GM12878 (cell line): ENCODE measurements at regions of chr9 and their contacts with region 1.

Region 1: GRCh38 chr9:97109194-97109811 is 70.4 kb upstream of the CTSV start:
- DNase-seq: peak; percentile 1
- ATAC-seq: peak; percentile 86
- H3K4me3 ChIP-seq: no peak overlapping the region
- H3K27ac ChIP-seq: no peak overlapping the region
- H3K4me1 ChIP-seq: no peaks in the 10 kb centered on the region
- H3K27me3 ChIP-seq: no peaks in the 10 kb centered on the region; a peak in 1 of 4 replicates
- CTCF ChIP-seq: peak; percentile 29 to 72 (median 69); a peak in 4 of 6 replicates
- EP300 ChIP-seq: no peak
- POLR2A ChIP-seq: no peak
- RAD21 ChIP-seq: peak; percentile 35; the same call in 1 of the 2 replicates

Region 2: DNA sequence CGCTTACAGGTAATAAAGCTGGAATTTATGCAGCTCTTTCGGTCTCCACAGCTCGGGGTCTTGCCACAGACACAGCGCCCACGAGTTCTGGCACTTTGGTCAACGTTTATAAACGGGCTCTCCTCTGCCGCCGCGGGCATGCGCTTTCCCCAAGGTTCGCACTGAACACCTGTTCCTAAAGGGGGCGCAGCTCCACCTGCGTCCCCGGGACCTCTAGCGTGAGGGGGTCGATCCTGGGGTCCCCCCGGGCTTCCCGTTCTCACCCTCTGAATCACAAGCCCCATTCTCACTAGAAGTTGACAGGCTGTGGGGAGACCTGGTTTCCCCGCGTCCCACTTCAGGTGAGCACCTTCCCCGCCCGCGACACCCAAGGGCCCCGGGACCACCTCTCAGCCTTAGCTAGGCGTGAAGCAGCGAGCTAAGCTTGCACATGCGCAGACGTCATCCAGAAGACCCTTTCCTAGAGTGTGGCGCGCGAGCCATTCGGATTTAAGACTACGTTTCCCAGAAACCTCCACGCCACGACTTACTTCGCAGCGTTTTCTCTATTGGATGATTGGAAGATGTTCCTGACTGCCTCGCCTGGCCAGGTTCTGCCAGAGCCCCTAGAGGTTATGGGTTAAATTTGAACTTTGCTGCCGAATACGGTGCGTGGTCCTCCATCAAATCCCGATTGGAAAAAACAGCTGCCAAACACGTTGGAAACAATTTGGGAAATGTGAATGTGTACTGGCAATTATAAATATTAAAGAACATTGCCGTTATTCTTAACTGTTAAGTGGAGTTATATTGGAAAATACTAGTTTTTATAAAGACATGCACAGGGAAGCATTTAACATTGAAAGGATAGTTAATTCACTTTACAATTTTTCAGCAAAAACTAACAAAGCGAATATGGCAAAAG is 233.6 kb before region 1 on chr9:
- CTCF ChIA-PET with region 1: interaction called, 5 read pairs
- POLR2A ChIA-PET with region 1: no interaction called
- RAD21 ChIA-PET with region 1: interaction called, 3 read pairs
- SMC1A ChIA-PET with region 1: no interaction called
- in situ Hi-C with region 1: no loop called
- intact Hi-C with region 1: loop called (anchors 5 kb)
- DNase-seq: peak; percentile 51
- ATAC-seq: peak; percentile 85
- H3K4me3 ChIP-seq: peak overlapping the region; percentile 62
- H3K27ac ChIP-seq: peak overlapping the region; percentile 22
- H3K4me1 ChIP-seq: peaks cover 35% of the 10 kb centered on the region
- H3K27me3 ChIP-seq: no peaks in the 10 kb centered on the region; a peak in 1 of 4 replicates
- CTCF ChIP-seq: peak; percentile 21 to 36 (median 23); a peak in 3 of 6 replicates
- EP300 ChIP-seq: no peak
- POLR2A ChIP-seq: peak; percentile 55
- RAD21 ChIP-seq: 0 out of 2 replicates have a peak, but pooled peaks have one; percentile 3

Region 3: DNA sequence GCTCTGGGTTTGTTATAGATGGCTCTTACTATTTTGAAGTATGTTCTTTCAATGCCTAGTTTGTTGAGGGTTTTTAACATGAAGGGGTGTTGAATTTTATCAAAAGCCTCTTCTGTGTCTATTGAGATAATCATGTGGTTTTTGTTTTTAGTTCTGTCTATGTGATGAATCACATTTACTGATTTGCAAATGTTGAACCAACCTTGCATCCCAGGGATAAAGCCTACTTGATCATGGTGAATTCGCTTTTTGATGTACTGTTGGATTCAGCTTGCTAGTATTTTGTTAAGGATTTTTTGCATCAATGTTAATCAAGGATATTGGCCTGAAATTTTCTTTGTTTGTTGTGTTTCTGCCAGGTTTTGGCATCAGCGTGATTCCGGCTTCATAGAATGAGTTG is 223.7 kb after region 1 on chr9:
- CTCF ChIA-PET with region 1: no interaction called
- POLR2A ChIA-PET with region 1: no interaction called
- RAD21 ChIA-PET with region 1: no interaction called
- SMC1A ChIA-PET with region 1: no interaction called
- in situ Hi-C with region 1: no loop called
- intact Hi-C with region 1: no loop called
- DNase-seq: no peak
- ATAC-seq: no peak
- H3K4me3 ChIP-seq: no peak overlapping the region
- H3K27ac ChIP-seq: no peak overlapping the region
- H3K4me1 ChIP-seq: no peaks in the 10 kb centered on the region
- H3K27me3 ChIP-seq: no peaks in the 10 kb centered on the region
- CTCF ChIP-seq: no peak
- EP300 ChIP-seq: no peak
- POLR2A ChIP-seq: no peak
- RAD21 ChIP-seq: no peak